GM10248 (cell line): ENCODE measurements at regions of chr22 and their contacts with region 1.

Region 1: GRCh38 chr22:50089682-50090411 is at the start of gene MOV10L1:
- DNase-seq: no peak
- CTCF ChIP-seq: no peak

Region 2: GRCh38 chr22:49536571-49537131 is 553.2 kb before region 1 on chr22:
- CTCF ChIA-PET with region 1: no interaction called
- POLR2A ChIA-PET with region 1: no interaction called
- DNase-seq: no peak
- CTCF ChIP-seq: no peak

Region 3: GRCh38 chr22:50071432-50072166 is 18.2 kb before region 1 on chr22:
- CTCF ChIA-PET with region 1: no interaction called
- POLR2A ChIA-PET with region 1: no interaction called
- DNase-seq: no peak
- CTCF ChIP-seq: no peak

Region 4: GRCh38 chr22:50105208-50106100 is 15.6 kb after region 1 on chr22:
- CTCF ChIA-PET with region 1: interaction called, 10 read pairs
- POLR2A ChIA-PET with region 1: no interaction called
- DNase-seq: peak; percentile 59
- CTCF ChIP-seq: no peak